GM10248 (cell line): ENCODE measurements at regions of chr6 and their contacts with region 1.

Region 1: GRCh38 chr6:149043476-149044130 is 273.9 kb upstream of the TAB2 start:
- DNase-seq: no peak
- CTCF ChIP-seq: peak; percentile 31

Region 2: GRCh38 chr6:147689398-147689797 is 1354.2 kb before region 1 on chr6:
- CTCF ChIA-PET with region 1: no interaction called
- POLR2A ChIA-PET with region 1: no interaction called
- DNase-seq: no peak
- CTCF ChIP-seq: no peak

Region 3: DNA sequence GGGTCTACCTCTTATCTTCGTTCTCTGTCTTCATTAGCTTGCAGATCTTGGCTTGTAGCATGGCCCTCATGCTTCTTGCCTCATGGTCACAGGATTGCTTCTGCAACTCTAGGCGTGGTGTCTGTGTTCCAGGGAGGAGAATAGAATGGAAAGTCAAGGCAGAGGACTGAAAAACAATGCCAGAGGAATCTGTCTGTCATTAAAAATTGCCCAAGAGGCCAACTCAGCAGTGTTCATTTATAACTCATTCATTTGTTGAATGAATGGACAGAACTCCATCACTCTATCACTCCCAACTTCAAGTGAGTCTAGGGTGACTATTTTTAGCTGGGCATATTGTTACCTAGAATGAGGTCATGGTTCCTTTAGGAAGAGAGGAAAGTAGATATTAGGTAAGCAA is 117.1 kb before region 1 on chr6:
- CTCF ChIA-PET with region 1: no interaction called
- POLR2A ChIA-PET with region 1: no interaction called
- DNase-seq: no peak
- CTCF ChIP-seq: no peak

Region 4: DNA sequence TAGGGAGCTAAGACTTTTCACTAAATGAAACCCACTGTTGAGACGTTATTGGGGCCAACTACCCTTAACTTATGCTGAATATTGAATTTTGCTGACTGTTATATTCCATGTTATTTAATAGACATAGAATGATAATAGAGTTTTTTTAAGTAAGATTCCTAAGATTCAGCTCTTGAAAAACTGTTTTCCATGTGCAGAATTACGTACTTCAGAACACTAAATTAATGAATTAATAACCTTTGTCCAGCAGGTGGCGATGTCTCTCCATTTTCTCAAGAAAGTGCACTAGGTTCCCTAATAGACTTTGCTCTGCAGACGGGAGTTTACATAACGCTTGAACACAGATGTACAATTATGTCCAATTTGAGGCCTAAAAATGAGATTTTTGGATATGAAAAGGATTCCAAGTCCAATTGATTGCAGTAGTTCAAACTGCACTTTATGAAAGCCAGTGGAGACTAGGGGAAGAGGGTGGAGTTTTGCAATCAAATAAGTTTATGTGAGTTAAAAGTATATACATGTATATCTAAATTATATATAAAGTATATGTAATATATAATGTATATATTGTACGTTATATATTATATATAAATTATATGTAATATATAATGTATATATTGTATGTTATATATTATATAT is 14.7 kb before region 1 on chr6:
- CTCF ChIA-PET with region 1: interaction called, 56 read pairs
- POLR2A ChIA-PET with region 1: interaction called, 3 read pairs
- DNase-seq: peak; percentile 59
- CTCF ChIP-seq: peak; percentile 54

Region 5: DNA sequence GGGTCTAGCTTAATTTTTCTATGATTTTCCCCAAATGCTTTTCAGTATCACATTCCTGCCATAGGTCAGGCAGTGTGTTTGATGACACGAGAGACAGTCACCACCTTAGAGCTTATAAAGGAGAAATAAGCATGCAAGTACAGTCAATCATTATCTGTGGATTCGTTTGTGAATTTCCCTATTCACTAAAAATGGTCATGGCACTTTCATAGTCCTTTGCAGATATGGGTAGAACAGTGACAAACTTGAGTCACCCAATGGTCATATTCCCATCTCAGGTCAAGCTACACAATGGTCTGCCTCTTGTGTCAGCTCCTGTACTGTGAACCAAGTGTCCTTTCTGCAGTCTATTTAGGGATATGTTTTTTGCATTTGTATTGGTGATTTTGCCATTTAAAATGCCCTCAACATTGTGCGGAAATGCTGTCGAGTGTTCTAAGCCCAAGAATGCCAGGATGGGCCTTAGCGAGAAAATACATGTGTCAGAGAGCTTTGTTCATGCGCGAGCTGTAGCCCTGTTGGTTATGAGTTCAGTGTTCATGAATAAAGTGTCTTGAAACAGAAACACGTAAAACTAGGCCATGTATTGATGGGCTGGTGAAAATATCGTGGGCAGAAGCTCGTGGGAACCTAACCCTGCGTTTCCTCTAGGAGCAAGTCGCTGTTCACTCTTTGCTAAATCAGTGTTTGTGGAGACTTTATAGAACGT is 376.2 kb after region 1 on chr6:
- CTCF ChIA-PET with region 1: interaction called, 10 read pairs
- POLR2A ChIA-PET with region 1: no interaction called
- DNase-seq: no peak
- CTCF ChIP-seq: no peak

Region 6: GRCh38 chr6:149440735-149441671 is 397.4 kb after region 1 on chr6:
- CTCF ChIA-PET with region 1: no interaction called
- POLR2A ChIA-PET with region 1: no interaction called
- DNase-seq: no peak
- CTCF ChIP-seq: no peak

Region 7: DNA sequence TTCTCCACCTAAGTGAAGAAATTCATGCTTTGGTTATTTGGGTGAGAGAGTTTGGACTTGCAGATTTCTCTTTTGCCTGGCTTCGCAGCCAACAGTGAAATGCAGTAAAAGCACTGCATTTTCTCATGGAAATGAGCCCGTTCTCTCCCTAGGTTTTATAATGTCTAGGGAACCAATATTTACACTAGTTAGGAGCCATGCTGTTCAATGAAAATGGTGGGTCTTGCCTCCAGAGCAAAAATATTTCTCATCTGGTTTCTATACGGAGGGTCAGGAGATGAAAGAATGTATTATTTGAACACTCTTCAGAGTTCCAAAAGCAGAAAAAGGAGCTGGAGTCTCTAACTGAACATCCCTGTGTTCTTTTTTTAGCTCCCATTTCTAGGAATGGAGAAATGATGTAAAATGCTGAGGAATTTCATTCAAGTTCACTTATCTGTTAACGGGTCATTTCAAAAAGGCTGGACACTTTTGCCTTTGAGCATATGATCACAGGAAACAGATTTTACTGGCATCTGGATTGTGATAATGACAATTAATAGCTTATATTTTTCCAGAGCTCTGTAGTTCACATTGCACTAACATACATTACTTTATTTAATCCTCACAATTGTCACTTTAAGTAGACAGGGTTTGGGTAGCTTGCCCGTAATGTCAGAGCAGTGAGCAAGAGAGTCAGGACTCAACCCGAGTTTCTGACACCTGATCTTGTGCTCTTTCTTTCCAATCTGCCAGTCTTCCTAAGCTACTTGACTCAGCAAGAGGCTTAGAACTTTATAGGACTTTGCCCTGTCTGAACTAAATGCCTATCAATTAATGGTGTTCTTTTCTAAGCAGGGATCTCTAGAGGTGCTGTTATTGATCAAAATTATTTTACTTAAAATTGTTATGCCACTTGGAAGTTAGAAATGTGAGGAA is 1177.3 kb after region 1 on chr6:
- CTCF ChIA-PET with region 1: no interaction called
- POLR2A ChIA-PET with region 1: no interaction called
- DNase-seq: no peak
- CTCF ChIP-seq: no peak